PC-9 (cell line): ENCODE measurements at regions of chr3 and their contacts with region 1.

Region 1: GRCh38 chr3:16647668-16648067 is 42.4 kb upstream of the DAZL start:
- DNase-seq: no peak
- H3K4me3 ChIP-seq: no peak overlapping the region
- H3K27ac ChIP-seq: no peak overlapping the region
- H3K4me1 ChIP-seq: no peaks in the 10 kb centered on the region
- H3K27me3 ChIP-seq: no peaks in the 10 kb centered on the region
- CTCF ChIP-seq: no peak

Region 2: GRCh38 chr3:16665282-16665741 is 17.6 kb after region 1 on chr3:
- CTCF ChIA-PET with region 1: interaction called, 12 read pairs
- POLR2A ChIA-PET with region 1: no interaction called
- intact Hi-C with region 1: no loop called
- DNase-seq: peak; percentile 34 to 87
- H3K4me3 ChIP-seq: peak overlapping the region; percentile 0; the same call in 1 of the 2 replicates
- H3K27ac ChIP-seq: peak overlapping the region; percentile 67
- H3K4me1 ChIP-seq: peaks cover 19% of the 10 kb centered on the region
- H3K27me3 ChIP-seq: no peaks in the 10 kb centered on the region
- CTCF ChIP-seq: no peak

Region 3: GRCh38 chr3:16994854-16995537 is 347.3 kb after region 1 on chr3:
- CTCF ChIA-PET with region 1: no interaction called
- POLR2A ChIA-PET with region 1: interaction called, 11 read pairs
- intact Hi-C with region 1: no loop called
- DNase-seq: peak; percentile 29 to 67
- H3K4me3 ChIP-seq: no peak overlapping the region
- H3K27ac ChIP-seq: no peak overlapping the region
- H3K4me1 ChIP-seq: peaks cover 15% of the 10 kb centered on the region
- H3K27me3 ChIP-seq: no peaks in the 10 kb centered on the region
- CTCF ChIP-seq: no peak